Activated T-helper 1 cell treated with anti-CD3 and anti-CD28 coated beads, Interleukin-12 subunit alpha, Interleukin-12 subunit beta, Interleukin-2, Interleukin-4 antibody, amounts not matched to agents 30 ng/mL and 10 ng/mL and 1 ng/mL, durations not matched to agents 14 hours and 24 hours and 36 hours (primary cell): ENCODE measurements at regions of chr16 and their contacts with region 1.

Region 1: GRCh38 chr16:57734925-57735754 is 430 bp upstream of the KATNB1 start:
- DNase-seq: peak; percentile 97
- H3K4me3 Mint-ChIP-seq: peak overlapping the region; percentile 97
- H3K27ac Mint-ChIP-seq: peak overlapping the region; percentile 97
- H3K4me1 Mint-ChIP-seq: peaks cover 19% of the 10 kb centered on the region
- H3K27me3 Mint-ChIP-seq: no peaks in the 10 kb centered on the region

Region 2: DNA sequence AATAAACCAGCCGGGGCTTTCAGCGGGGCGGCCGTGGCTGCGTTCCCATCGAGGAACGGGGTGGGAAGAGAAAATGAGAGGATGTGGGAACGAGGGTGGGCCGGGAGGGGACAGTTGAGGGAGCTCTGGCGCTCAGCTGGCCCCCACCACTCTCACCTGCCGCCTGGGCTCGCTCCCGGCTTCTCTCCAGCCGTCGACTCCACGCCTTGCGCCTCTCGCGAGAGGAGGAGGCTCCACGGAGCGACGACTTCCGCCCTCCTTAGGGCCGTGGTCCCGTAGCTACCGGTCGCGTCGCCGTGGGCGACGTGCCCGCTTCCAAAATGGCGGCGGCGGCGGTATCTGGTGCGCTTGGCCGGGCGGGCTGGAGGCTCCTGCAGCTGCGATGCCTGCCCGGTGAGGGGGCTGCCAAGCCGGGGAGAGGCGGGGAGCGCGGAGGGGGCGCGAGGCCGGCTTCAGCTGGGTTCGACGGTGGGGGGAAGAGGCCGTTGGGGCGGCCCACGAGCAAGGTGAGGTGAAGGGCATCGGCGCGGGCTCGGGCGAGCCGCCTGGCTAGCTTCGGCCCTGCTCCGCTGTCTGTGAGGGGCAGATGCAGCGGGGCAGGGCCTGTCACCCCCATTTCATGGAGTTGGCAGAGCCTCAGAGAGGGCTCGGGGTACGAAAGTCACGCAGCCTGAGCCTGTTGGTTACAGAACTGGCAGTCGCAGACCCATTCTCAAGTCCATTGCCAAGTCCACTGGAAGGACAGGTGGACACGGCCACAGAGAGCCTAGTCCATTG is 287.8 kb before region 1 on chr16 and contains the starts of genes CIAPIN1 and COQ9:
- intact Hi-C with region 1: loop called (anchors 1 kb)
- DNase-seq: peak; percentile 90
- H3K4me3 Mint-ChIP-seq: peak within 1 kb of the TSS; percentile 94
- H3K27ac Mint-ChIP-seq: peak within 1 kb of the TSS; percentile 90
- H3K4me1 Mint-ChIP-seq: peaks cover 37% of the 10 kb centered on the region
- H3K27me3 Mint-ChIP-seq: no peaks in the 10 kb centered on the region
- total RNA-seq, gene CIAPIN1: 98.0 and 98.4 TPM in 2 replicates
- total RNA-seq, gene COQ9: 51.2 and 51.6 TPM in 2 replicates

Region 3: GRCh38 chr16:57535680-57536305 is 199.3 kb before region 1 on chr16:
- intact Hi-C with region 1: loop called (anchors 1 kb)
- DNase-seq: peak; percentile 92
- H3K4me3 Mint-ChIP-seq: peak overlapping the region; percentile 78
- H3K27ac Mint-ChIP-seq: peak overlapping the region; percentile 93
- H3K4me1 Mint-ChIP-seq: peaks cover 62% of the 10 kb centered on the region
- H3K27me3 Mint-ChIP-seq: no peaks in the 10 kb centered on the region

Region 4: DNA sequence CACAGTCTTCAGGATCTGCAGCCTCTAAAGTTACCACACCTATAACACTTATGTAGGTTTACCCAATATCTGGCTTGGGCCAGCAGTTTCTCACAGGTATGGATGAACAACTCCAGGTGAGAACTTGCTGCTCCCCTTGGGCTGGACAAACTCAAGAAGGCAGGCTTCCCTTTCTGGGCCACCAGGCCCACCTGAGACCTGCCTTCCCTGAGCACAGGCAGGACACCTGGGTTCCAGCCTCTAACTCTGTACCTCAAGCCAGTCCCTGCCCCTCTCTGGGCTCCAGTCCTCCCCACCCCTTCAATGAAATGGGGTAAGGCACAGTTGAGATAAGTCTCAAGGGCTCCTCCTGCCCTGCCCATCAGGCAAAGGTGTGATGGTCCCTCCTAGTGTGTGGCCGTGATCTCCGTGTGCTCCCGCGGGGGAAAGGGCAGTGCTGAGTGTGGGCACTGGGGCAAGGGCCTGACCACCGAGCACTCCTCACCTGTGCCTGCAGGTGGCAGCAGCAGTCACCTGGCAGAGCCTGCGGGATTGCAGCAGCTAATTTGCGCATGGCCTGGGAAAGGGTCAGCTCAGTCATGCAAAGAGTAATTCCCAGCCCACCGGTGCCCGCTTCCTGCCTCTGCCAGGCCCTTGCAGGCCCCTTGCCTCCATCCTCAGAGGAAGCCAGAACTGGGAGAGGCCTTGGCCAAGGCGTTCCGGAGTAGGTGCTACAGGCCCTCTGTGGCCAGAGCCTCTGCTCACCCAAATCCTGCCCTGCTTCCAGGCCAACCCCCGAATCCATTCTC is 134.9 kb before region 1 on chr16:
- intact Hi-C with region 1: loop called (anchors 1 kb)
- DNase-seq: no peak
- H3K4me3 Mint-ChIP-seq: no peak overlapping the region
- H3K27ac Mint-ChIP-seq: peak overlapping the region; percentile 24
- H3K4me1 Mint-ChIP-seq: peaks cover 62% of the 10 kb centered on the region
- H3K27me3 Mint-ChIP-seq: no peaks in the 10 kb centered on the region

Region 5: GRCh38 chr16:57810197-57811031 is 75.3 kb after region 1 on chr16:
- intact Hi-C with region 1: loop called (anchors 1 kb)
- DNase-seq: peak; percentile 80
- H3K4me3 Mint-ChIP-seq: peak overlapping the region; percentile 61
- H3K27ac Mint-ChIP-seq: peak overlapping the region; percentile 83
- H3K4me1 Mint-ChIP-seq: peaks cover 36% of the 10 kb centered on the region
- H3K27me3 Mint-ChIP-seq: peaks cover 18% of the 10 kb centered on the region

Region 6: DNA sequence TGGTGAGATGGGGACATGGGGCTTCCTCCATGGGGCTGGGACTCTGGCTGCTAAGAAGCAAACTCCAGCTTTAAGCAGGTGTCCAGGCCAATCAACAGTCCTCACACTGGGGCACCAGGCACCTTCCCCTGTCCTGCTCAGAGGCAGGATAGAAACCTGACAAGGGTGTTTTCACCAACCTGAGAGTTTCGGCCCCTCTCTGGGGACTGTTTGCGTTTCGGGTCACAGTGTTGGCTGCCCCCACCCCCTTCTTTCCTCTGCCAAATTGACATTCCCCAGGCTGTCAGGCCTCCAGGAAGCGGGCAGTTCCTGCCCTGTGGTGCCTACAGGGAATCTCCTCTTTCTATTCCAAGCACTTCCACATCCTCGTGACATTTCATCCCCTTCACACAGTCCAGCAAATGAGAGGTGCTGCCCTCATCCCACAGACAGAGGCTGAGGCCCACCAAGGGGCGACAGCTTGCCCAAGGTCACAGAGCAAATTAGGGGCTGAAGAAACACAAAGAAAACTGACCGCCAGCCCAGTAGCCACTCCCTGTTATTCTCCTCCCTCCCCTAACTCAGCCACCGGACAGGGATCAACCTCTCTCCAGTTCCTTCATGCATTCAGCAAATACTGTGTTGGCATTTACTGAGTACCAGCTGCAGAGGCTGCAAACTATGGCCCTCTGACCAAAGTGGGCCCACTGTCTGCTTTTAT is 328.4 kb after region 1 on chr16:
- intact Hi-C with region 1: no loop called
- DNase-seq: no peak
- H3K4me3 Mint-ChIP-seq: no peak overlapping the region
- H3K27ac Mint-ChIP-seq: no peak overlapping the region
- H3K4me1 Mint-ChIP-seq: no peaks in the 10 kb centered on the region
- H3K27me3 Mint-ChIP-seq: peaks cover 1% of the 10 kb centered on the region

Region 7: DNA sequence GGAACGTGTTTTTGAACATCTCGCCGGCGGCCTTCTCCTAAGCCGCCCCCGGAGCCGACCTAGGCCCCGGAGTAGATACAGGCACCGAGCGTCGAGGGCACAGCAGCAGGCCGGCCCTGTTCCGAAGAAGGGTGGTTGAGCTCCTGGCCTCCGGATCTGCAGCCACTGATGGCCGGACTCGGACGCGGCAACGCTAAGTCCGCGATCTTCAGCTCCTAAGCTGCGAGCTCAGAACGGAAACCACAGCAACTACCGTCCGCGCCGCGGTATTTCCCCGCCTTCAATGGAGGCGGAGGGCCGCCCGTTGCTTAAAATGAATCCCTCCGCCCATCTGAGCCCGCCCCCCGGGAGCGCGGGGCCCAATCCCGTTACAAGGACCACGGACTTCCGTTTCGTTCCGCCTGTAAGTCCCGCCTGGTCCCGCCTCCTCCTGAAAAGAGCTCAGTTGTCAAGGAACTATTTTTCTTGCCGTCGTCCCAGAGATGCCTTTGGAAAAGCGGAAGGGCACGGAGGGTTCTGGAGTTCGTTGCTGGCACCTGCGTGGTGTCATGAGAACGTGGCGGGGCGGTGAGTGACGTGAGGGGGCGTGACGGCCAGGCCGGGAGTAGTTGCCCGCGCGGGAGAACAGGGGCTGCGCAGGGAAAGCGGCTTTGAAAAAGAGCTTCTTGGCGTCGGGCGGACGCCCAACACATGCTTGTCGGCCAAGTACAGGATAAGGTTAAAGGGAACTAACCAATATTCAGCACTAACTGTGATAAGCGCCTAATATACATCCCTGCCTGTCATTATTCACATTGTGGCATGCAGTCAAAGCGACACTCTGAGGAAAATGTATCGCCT is 394.2 kb after region 1 on chr16 and contains the start of gene CFAP20:
- intact Hi-C with region 1: loop called (anchors 1 kb)
- DNase-seq: peak; percentile 96
- H3K4me3 Mint-ChIP-seq: peak within 1 kb of the TSS; percentile 84
- H3K27ac Mint-ChIP-seq: peak within 1 kb of the TSS; percentile 83
- H3K4me1 Mint-ChIP-seq: peaks cover 32% of the 10 kb centered on the region
- H3K27me3 Mint-ChIP-seq: no peaks in the 10 kb centered on the region
- total RNA-seq, gene CFAP20: 64.9 and 65.2 TPM in 2 replicates